ENCODE measurements at regions of chr11 and their contacts with region 1.

Region 1: DNA sequence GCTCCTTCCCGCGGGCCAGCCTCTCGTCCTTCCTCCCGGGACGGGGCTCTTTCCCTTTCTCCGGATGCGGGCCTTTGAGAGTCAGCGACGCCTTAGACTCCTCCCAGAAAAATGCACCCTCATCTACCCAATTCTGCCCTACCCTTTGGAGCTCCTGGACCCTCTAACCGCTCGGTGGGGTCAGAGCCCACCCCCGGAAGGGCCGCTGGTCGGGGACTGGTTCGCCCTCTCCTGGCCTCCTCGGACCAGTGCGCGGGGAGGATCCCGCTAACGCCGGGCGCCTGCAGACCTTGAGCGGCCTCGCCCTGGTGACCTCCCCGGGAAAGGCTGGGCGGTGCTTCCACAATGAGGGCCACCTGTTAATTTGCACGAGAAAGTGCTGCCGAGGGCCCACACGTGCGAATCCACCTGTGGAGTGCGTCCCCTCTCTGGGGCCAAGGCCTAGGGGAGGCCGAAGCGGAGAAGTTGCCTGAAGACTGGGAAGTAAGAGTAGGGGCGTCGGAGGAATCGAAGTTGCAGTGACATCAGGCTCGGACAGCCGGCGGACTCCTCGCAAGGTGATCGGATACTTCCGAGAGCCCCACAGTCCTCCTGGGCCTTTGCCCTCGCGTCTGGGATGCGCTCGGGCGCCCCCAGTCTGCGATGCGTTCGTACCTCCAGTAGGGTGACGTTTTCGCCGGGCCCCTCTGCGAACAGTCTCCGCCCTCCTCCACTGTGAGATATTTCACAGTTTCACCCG is 61.5 kb downstream of the ENDOD1 start:
- DNase-seq: peak; percentile 86 to 95 (median 90)
- H3K4me3 ChIP-seq: peak overlapping the region; percentile 68
- H3K4me3 Mint-ChIP-seq: peak overlapping the region; percentile 86 to 95 (median 93)
- H3K27ac ChIP-seq: peak overlapping the region; percentile 60
- H3K27ac Mint-ChIP-seq: peak overlapping the region; percentile 90 to 99 (median 97)
- H3K4me1 ChIP-seq: peaks cover 26% of the 10 kb centered on the region
- H3K4me1 Mint-ChIP-seq: peaks cover 31 to 45% (median 34%) of the 10 kb centered on the region in 3 donors
- H3K27me3 ChIP-seq: no peaks in the 10 kb centered on the region
- H3K27me3 Mint-ChIP-seq: peaks cover 2 to 3% of the 10 kb centered on the region in 2 donors

Region 2: GRCh38 chr11:95067039-95067840 is 83.9 kb before region 1 on chr11:
- CTCF ChIA-PET with region 1: interaction called, 60 read pairs
- POLR2A ChIA-PET with region 1: interaction called, 13 read pairs
- DNase-seq: peak; percentile 65 to 84 (median 76)
- H3K4me3 ChIP-seq: peak overlapping the region; percentile 78
- H3K4me3 Mint-ChIP-seq: peak overlapping the region; percentile 91 to 100 (median 97)
- H3K27ac ChIP-seq: peak overlapping the region; percentile 96
- H3K27ac Mint-ChIP-seq: peak overlapping the region; percentile 85 to 99 (median 99)
- H3K4me1 ChIP-seq: peaks cover 29% of the 10 kb centered on the region
- H3K4me1 Mint-ChIP-seq: peaks cover 27 to 37% (median 33%) of the 10 kb centered on the region in 3 donors
- H3K27me3 ChIP-seq: no peaks in the 10 kb centered on the region
- H3K27me3 Mint-ChIP-seq: no peaks in the 10 kb centered on the region

Region 3: GRCh38 chr11:95165638-95166037 is 14.5 kb after region 1 on chr11:
- CTCF ChIA-PET with region 1: interaction called, 20 read pairs
- POLR2A ChIA-PET with region 1: no interaction called
- DNase-seq: no peak
- H3K4me3 ChIP-seq: no peak overlapping the region
- H3K4me3 Mint-ChIP-seq: no peak overlapping the region
- H3K27ac ChIP-seq: no peak overlapping the region
- H3K27ac Mint-ChIP-seq: peak overlapping the region in 1 of 8 donors; percentile 64
- H3K4me1 ChIP-seq: no peaks in the 10 kb centered on the region
- H3K4me1 Mint-ChIP-seq: peaks cover 0 to 14% (median 14%) of the 10 kb centered on the region in 3 donors
- H3K27me3 ChIP-seq: no peaks in the 10 kb centered on the region
- H3K27me3 Mint-ChIP-seq: no peaks in the 10 kb centered on the region

Region 4: DNA sequence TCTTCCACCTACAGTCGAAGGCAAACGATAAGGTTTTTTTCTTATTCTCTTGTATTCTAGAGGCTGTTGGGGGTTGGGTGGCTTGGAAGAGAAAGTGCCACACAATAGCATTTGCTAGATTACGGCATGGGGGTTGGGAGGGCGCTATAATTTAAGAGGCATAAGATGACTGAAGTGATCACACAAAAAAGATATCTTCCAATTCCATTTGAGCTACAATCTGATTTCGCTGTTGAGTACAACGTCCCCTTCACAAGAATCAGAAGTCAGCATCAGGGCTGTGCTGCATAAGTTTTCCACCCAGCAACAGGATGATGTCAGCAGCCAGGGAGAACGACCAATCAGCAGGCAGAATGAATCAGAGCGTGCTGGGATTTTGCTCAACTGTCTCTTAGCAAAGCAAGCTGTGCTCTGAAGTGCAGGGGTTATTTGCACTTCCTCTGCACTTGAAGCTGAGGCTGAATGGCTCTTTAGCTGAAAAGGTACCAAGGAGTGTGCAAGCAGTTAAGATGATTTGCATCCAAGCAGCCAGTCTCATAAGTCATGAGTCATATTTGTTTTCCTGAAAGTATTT is 103.1 kb after region 1 on chr11:
- CTCF ChIA-PET with region 1: interaction called, 18 read pairs
- POLR2A ChIA-PET with region 1: no interaction called
- DNase-seq: peak; percentile 50 to 85 (median 72)
- H3K4me3 ChIP-seq: peak overlapping the region; percentile 52
- H3K4me3 Mint-ChIP-seq: peak overlapping the region; percentile 81 to 94 (median 88)
- H3K27ac ChIP-seq: peak overlapping the region; percentile 10
- H3K27ac Mint-ChIP-seq: peak overlapping the region; percentile 35 to 96 (median 88)
- H3K4me1 ChIP-seq: peaks cover 37% of the 10 kb centered on the region
- H3K4me1 Mint-ChIP-seq: peaks cover 21 to 41% (median 31%) of the 10 kb centered on the region in 3 donors
- H3K27me3 ChIP-seq: no peaks in the 10 kb centered on the region
- H3K27me3 Mint-ChIP-seq: no peaks in the 10 kb centered on the region

Region 5: GRCh38 chr11:95337175-95337957 is 186.3 kb after region 1 on chr11:
- CTCF ChIA-PET with region 1: no interaction called
- POLR2A ChIA-PET with region 1: no interaction called
- DNase-seq: peak in 3 of 5 donors; percentile 6 to 48 (median 11)
- H3K4me3 ChIP-seq: peak overlapping the region; percentile 35
- H3K4me3 Mint-ChIP-seq: no peak overlapping the region
- H3K27ac ChIP-seq: no peak overlapping the region
- H3K27ac Mint-ChIP-seq: no peak overlapping the region
- H3K4me1 ChIP-seq: peaks cover 16% of the 10 kb centered on the region
- H3K4me1 Mint-ChIP-seq: peaks cover 0 to 4% (median 0%) of the 10 kb centered on the region in 3 donors
- H3K27me3 ChIP-seq: no peaks in the 10 kb centered on the region
- H3K27me3 Mint-ChIP-seq: no peaks in the 10 kb centered on the region

Region 6: DNA sequence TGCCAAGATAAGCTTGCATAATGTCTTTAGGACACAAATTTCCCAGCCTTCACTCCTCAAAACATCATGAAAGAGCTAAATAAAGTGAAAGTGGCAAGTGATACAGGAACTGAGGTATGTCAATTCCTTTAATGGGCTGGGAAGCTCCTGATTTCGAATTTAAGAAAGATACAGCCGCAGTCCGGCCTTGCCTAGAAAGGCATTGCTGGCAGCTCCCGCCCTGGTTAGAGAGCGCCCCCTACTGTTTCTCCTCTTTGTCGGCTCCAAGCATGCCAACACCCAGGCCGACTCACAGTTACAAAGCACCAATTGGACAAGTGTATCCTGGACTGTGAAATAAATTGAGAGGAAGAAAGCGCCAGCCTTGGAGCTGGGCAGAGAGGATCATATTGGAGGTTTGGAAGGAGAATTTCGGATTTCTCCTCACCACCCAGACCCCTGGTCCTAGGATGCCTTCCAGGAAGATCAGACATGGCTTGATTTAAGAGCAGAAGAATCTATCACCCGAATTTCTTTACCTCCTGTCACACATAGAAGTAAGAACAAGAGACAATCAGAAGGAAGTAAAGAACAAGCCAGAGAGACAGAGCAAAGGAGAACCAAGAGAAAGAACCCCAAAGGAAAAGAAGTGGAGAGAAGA is 554.5 kb after region 1 on chr11:
- CTCF ChIA-PET with region 1: interaction called, 335 read pairs
- POLR2A ChIA-PET with region 1: interaction called, 6 read pairs
- DNase-seq: peak; percentile 67 to 88 (median 79)
- H3K4me3 ChIP-seq: peak overlapping the region; percentile 35
- H3K4me3 Mint-ChIP-seq: no peak overlapping the region
- H3K27ac ChIP-seq: no peak overlapping the region
- H3K27ac Mint-ChIP-seq: no peak overlapping the region
- H3K4me1 ChIP-seq: peaks cover 47% of the 10 kb centered on the region
- H3K4me1 Mint-ChIP-seq: peaks cover 7 to 10% (median 9%) of the 10 kb centered on the region in 3 donors
- H3K27me3 ChIP-seq: no peaks in the 10 kb centered on the region
- H3K27me3 Mint-ChIP-seq: no peaks in the 10 kb centered on the region

Region 7: DNA sequence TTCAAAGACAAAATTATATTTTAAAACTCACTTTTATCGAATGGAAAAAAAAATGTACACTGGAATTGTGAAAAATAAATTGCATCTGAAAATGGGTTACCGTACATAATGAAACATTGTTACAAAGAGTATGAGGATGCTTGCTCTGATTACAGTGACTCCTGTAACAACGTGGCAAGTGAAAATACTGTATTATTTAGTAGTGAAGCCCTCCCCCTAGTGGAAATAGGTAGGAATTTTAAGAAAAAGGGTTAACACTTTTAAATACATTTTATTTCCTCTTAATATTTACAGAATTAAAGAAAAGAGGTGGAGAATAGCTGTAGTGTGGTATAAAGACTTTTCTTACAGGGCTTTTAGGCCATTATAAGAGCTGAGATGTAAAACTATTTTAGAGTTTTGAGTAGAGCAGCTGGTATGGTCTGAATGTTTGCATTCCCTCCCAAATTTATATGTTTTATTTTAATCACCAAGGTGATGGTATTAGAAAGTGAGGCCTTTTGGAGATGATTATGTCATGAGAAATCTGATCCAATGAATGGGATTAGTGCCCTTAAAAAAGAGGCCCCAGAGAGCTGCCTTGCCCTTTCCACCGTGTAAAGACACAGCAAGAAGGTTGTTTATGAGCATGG is 613.3 kb after region 1 on chr11:
- CTCF ChIA-PET with region 1: interaction called, 96 read pairs
- POLR2A ChIA-PET with region 1: no interaction called
- DNase-seq: peak in 2 of 5 donors; percentile 47 to 51
- H3K4me3 ChIP-seq: no peak overlapping the region
- H3K4me3 Mint-ChIP-seq: no peak overlapping the region
- H3K27ac ChIP-seq: no peak overlapping the region
- H3K27ac Mint-ChIP-seq: no peak overlapping the region
- H3K4me1 ChIP-seq: peaks cover 4% of the 10 kb centered on the region
- H3K4me1 Mint-ChIP-seq: no peaks in the 10 kb centered on the region
- H3K27me3 ChIP-seq: no peaks in the 10 kb centered on the region
- H3K27me3 Mint-ChIP-seq: peaks cover 0 to 21% of the 10 kb centered on the region in 2 donors